Transverse colon (tissue), 4 donors: ENCODE measurements at regions of chr14 and their contacts with region 1.

Region 1: DNA sequence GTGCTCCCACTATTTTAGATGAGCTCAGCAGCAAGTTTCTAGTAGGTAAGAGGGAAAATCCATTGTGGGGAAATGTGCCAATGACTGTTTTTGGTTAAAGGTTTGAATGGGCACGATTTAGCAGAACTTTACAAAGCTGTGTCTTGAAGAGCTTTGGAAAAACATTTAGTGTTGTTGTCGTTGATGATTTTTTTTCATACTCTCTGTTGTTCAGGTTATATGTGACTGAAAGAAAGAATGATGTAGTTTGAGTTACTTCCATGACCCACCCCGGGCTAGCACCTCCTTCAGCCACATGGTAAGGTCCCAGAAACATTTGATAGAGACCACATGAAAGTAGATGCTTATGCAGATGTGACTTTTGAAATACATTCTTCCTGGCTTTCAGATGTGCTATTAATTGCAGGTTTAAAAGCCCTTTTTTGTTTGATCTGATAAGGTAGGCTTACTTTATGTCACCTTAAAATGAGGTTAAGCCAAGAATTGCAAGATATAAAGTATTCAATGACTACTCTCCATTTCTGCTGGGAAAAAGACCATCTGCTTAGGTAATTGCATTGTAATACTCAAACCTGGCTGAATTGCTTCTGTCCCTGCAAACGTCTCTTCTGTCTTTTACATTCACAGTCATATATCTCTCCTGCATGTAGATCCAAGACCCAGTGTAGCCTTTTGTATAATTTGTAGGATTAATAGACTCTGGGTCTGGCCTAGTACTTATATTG is 250.6 kb downstream of the RGS6 start:
- DNase-seq: no peak
- H3K4me3 ChIP-seq: no peak overlapping the region
- H3K27ac ChIP-seq: no peak overlapping the region
- H3K4me1 ChIP-seq: no peaks in the 10 kb centered on the region
- H3K27me3 ChIP-seq: no peaks in the 10 kb centered on the region
- CTCF ChIP-seq: no peak
- EP300 ChIP-seq: no peak
- POLR2A ChIP-seq: no peak

Region 2: DNA sequence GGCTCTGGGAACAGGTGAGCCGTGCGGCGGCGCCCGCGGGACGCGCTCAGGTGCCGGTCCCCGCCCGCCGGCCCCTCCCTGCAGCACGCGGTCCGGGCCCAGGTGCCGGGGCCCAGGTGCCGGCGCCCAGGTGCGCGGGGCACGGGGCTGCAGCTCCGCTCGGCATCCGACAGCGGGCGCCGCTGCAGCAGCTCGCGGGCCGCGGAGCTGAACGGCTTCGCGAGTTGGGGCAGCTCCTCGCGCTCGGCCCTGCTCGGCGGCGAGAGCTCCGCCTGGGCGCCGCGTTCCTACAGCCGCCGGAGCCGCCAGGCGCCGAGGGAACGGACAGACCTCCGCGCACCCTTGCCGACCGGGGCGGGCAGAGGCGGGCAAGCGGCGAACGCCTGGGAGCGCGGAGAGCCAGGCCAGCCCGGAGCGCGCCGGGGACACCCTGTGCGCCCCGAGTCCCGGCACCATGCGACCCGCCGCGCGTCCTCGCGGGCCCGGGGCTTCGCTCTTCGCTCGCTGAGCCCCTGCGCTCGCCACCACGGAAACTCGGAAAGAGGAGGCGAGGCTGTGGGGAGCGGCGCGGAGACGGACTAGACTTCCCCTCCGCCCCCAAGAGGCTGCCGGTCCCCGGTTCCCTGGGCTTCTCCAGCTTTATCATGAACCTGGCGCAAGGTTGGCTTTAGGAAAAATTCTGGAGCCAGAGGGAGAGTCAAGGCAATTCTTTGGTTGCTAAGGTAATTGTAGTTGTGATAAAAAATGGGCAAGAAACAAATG is 250.5 kb before region 1 on chr14 and contains the start of gene RGS6:
- in situ Hi-C with region 1: no loop called
- intact Hi-C with region 1: loop called (anchors 5 kb)
- DNase-seq: peak; percentile 12
- H3K4me3 ChIP-seq: peak within 1 kb of the TSS in 3 of 4 donors; percentile 19 to 48 (median 31)
- H3K27ac ChIP-seq: no peak within 1 kb of the TSS
- H3K4me1 ChIP-seq: peaks cover 0 to 20% (median 7%) of the 10 kb centered on the region in 4 donors
- H3K27me3 ChIP-seq: peaks cover 61% of the 10 kb centered on the region
- CTCF ChIP-seq: no peak
- EP300 ChIP-seq: no peak
- POLR2A ChIP-seq: no peak
- total RNA-seq, gene RGS6: 0.41 to 0.48 TPM in 2 of 4 donors, not detected in the others

Region 3: GRCh38 chr14:72594099-72594901 is 411.4 kb after region 1 on chr14:
- in situ Hi-C with region 1: no loop called
- intact Hi-C with region 1: no loop called
- DNase-seq: no peak
- H3K4me3 ChIP-seq: no peak overlapping the region
- H3K27ac ChIP-seq: no peak overlapping the region
- H3K4me1 ChIP-seq: no peaks in the 10 kb centered on the region
- H3K27me3 ChIP-seq: peaks cover 3% of the 10 kb centered on the region
- CTCF ChIP-seq: no peak
- EP300 ChIP-seq: no peak
- POLR2A ChIP-seq: no peak